Esophagus muscularis mucosa (tissue), 4 donors: ENCODE measurements at regions of chr20 and their contacts with region 1.

Region 1: DNA sequence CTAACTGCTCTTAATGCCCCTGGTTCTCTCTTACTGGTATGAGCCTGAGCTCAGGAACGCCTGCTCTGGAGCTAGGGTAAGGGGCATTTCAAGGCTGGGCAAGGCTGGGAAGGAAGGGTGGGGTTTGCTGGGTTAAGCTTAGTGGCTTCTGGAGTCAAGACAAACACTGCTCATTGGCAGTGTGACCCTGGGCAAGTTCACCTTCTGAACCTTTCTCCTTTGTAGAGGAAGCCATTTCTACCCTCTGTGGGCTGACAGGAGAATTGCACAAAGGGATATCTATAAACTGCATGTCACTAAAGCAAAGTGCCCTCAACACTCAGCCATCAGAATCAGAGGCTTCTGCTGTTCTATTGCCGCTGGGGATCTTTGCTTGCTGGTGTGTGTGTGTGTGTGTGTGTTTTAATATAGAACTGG is 20.3 kb upstream of the LRRN4 start:
- DNase-seq: no peak
- H3K4me3 ChIP-seq: no peak overlapping the region
- H3K27ac ChIP-seq: no peak overlapping the region
- H3K4me1 ChIP-seq: peaks cover 9 to 16% (median 11%) of the 10 kb centered on the region in 4 donors
- H3K27me3 ChIP-seq: no peaks in the 10 kb centered on the region
- CTCF ChIP-seq: peak in 1 of 3 experiments; percentile 19
- EP300 ChIP-seq: no peak
- POLR2A ChIP-seq: no peak

Region 2: GRCh38 chr20:5529331-5530148 is 544.6 kb before region 1 on chr20:
- intact Hi-C with region 1: loop called (anchors 2 kb)
- DNase-seq: peak; percentile 95
- H3K4me3 ChIP-seq: no peak overlapping the region
- H3K27ac ChIP-seq: no peak overlapping the region
- H3K4me1 ChIP-seq: peaks cover 10 to 16% (median 11%) of the 10 kb centered on the region in 4 donors
- H3K27me3 ChIP-seq: no peaks in the 10 kb centered on the region
- CTCF ChIP-seq: peak; percentile 62 to 87 (median 67)
- EP300 ChIP-seq: no peak
- POLR2A ChIP-seq: no peak

Region 3: GRCh38 chr20:5797843-5798462 is 276.2 kb before region 1 on chr20:
- intact Hi-C with region 1: loop called (anchors 10 kb)
- DNase-seq: no peak
- H3K4me3 ChIP-seq: no peak overlapping the region
- H3K27ac ChIP-seq: no peak overlapping the region
- H3K4me1 ChIP-seq: no peaks in the 10 kb centered on the region
- H3K27me3 ChIP-seq: no peaks in the 10 kb centered on the region
- CTCF ChIP-seq: no peak
- EP300 ChIP-seq: no peak
- POLR2A ChIP-seq: no peak

Region 4: DNA sequence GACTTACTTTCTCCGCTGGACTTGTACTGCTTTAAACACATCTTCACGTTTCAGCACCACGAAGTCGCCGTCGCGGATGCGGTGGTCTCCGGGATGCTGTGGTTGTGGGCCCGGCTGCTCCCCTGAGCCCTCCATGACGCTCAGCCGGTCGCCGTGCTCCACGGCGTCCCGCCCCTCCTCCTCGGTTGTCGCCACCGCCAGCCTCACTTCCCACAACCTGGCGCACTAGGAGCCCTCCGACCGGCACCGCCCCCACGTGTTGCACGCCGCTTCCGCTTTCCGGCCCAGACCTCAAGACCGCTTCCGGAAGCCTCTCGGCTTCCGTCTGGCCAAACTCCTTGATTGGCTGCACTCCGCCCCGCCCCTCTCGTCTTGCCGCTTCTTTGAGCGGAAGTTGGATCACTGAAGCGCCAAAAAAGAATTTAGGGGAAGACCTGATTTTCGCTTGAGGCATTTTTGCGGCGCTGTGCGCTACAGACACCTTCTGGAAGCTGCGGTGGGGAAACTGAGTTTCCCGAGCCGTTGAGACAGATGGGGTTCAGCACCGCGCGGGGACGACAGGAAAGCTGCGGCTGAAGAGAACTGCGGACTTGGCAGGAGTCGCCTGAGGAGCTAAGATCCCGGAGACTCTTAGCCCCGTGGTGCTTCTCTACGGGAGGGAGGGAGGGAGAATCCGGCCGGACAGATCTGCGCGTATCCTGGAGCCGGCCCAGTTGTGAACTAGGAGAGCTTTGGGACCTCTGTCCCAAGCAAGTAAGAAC is 123.7 kb before region 1 on chr20 and contains the starts of genes MCM8 and TRMT6:
- intact Hi-C with region 1: loop called (anchors 5 kb)
- DNase-seq: peak; percentile 99
- H3K4me3 ChIP-seq: peak within 1 kb of the TSS; percentile 65 to 79 (median 70)
- H3K27ac ChIP-seq: peak within 1 kb of the TSS; percentile 68 to 90 (median 83)
- H3K4me1 ChIP-seq: peaks cover 8 to 32% (median 23%) of the 10 kb centered on the region in 4 donors
- H3K27me3 ChIP-seq: no peaks in the 10 kb centered on the region
- CTCF ChIP-seq: no peak
- EP300 ChIP-seq: no peak
- POLR2A ChIP-seq: no peak
- total RNA-seq, gene MCM8: 4.0 to 5.6 (median 4.4) TPM
- total RNA-seq, gene TRMT6: 9.2 to 13.4 (median 9.7) TPM